ENCODE measurements at regions of chr2 and their contacts with region 1.

Region 1: DNA sequence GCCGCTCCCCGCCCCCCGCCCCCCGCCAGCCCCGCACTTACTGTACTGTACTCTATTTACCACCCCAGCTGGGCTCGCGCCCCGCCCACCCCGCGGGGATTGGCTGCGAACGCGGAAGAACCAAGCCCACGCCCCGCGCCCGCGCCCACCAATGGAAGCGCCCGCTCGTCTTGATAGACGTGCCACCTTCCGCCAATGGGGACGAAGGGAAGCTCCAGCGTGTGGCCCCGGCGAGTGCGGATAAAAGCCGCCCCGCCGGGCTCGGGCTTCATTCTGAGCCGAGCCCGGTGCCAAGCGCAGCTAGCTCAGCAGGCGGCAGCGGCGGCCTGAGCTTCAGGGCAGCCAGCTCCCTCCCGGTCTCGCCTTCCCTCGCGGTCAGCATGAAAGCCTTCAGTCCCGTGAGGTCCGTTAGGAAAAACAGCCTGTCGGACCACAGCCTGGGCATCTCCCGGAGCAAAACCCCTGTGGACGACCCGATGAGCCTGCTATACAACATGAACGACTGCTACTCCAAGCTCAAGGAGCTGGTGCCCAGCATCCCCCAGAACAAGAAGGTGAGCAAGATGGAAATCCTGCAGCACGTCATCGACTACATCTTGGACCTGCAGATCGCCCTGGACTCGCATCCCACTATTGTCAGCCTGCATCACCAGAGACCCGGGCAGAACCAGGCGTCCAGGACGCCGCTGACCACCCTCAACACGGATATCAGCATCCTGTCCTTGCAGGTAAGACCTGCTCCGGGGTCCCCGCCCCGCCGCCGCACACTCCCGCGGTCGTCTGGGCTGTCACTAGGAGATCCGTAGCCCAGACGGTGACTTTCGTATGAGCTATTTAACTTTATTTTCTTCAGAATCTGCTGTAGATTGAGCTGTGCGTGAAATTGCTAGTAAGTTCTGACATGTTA is at the start of gene ID2:
- DNase-seq: peak; percentile 94 to 99 (median 98)
- ATAC-seq: peak; percentile 76 to 81 (median 78)
- H3K4me3 ChIP-seq: peak within 1 kb of the TSS; percentile 80
- H3K4me3 Mint-ChIP-seq: peak within 1 kb of the TSS; percentile 94 to 99 (median 96)
- H3K27ac ChIP-seq: peak within 1 kb of the TSS; percentile 70
- H3K27ac Mint-ChIP-seq: peak within 1 kb of the TSS; percentile 89 to 93
- H3K4me1 ChIP-seq: peaks cover 19 to 48% of the 10 kb centered on the region in 2 experiments
- H3K4me1 Mint-ChIP-seq: peaks cover 44 to 60% (median 50%) of the 10 kb centered on the region in 3 donors
- H3K27me3 ChIP-seq: peaks cover 0 to 19% of the 10 kb centered on the region in 2 experiments
- H3K27me3 Mint-ChIP-seq: peaks cover 13 to 15% of the 10 kb centered on the region in 2 donors
- total RNA-seq, gene ID2: 55.5 to 153 (median 71.1) TPM

Region 2: DNA sequence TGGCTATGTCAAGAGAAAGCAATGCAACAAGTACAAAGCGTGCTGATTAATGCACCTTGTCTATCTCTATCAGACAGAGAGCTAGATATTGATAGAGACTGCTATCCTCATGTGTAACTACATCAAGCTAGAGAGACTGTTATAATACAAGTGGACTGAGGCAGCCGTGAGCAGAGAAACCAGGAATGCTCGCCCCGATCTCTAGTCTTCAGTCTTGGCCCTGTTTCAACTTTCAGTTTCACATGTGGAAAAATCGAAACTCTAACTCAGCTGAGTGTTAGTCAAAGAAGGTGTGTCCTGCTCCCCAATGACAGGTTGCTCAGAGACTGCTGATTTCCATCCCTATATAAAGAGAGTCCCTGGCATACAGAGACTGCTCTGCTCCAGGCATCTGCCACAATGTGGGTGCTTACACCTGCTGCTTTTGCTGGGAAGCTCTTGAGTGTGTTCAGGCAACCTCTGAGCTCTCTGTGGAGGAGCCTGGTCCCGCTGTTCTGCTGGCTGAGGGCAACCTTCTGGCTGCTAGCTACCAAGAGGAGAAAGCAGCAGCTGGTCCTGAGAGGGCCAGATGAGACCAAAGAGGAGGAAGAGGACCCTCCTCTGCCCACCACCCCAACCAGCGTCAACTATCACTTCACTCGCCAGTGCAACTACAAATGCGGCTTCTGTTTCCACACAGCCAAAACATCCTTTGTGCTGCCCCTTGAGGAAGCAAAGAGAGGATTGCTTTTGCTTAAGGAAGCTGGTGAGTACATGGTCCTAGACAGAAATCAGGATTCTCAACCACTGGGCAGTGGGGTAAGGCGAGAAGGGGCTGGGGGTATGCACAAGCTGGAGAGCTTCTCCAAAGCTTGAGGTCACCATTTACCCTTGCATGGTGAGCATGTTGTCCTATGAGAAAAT is 1804.4 kb before region 1 on chr2 and contains the start of gene RSAD2:
- CTCF ChIA-PET with region 1: no interaction called
- POLR2A ChIA-PET with region 1: interaction called in 1 of 2 experiments, 11 read pairs
- DNase-seq: peak in 18 of 35 experiments; percentile 4 to 77 (median 11)
- ATAC-seq: peak; percentile 76 to 83 (median 80)
- H3K4me3 ChIP-seq: peak within 1 kb of the TSS; percentile 55 to 71
- H3K4me3 Mint-ChIP-seq: peak within 1 kb of the TSS; percentile 74 to 91 (median 87)
- H3K27ac ChIP-seq: peak within 1 kb of the TSS; percentile 58
- H3K27ac Mint-ChIP-seq: peak within 1 kb of the TSS; percentile 89 to 94
- H3K4me1 ChIP-seq: peaks cover 32 to 53% of the 10 kb centered on the region in 2 experiments
- H3K4me1 Mint-ChIP-seq: peaks cover 63 to 79% (median 73%) of the 10 kb centered on the region in 3 donors
- H3K27me3 ChIP-seq: no peaks in the 10 kb centered on the region
- H3K27me3 Mint-ChIP-seq: no peaks in the 10 kb centered on the region
- total RNA-seq, gene RSAD2: 3.2 to 10.7 (median 7.2) TPM

Region 3: DNA sequence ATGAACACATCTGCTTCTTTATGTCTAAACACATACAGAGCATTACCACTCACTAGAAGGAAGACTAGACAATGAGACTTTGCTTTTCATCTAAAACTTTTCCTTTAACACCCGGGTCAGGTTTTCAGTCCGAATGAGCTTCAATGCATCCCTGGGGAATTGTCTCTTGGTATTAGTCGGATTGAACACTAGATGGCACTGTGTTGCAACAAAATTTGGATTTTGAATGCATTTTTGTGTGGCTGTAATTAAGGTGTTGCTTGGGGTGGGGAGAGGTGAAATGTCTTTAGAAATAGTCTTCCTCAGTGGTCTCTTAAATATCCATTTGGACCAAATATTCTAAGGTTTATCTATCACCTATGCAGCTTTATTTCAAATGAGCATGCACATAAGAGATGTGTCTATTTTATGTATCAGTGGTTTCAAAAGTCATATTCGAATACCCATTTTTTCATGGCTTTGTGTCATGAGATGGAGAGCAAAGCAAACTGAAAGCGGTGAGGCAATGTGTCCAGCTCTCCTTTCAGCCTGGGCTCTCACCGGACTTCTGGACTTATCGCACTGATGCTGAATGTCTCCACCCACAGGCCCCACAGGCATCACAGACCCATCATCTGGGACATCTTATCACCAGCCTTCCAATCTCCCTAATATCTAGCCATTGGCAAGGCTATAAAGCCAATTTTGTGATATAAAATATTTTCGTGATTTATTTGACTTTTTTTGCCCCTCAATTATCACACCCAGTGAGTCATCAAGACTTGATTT is 1254.6 kb before region 1 on chr2:
- CTCF ChIA-PET with region 1: interaction called, 6 to 11 read pairs
- POLR2A ChIA-PET with region 1: interaction called in 1 of 2 experiments, 5 read pairs
- DNase-seq: peak in 5 of 35 experiments; percentile 6 to 82 (median 40)
- ATAC-seq: peak; percentile 21 to 54 (median 38)
- H3K4me3 ChIP-seq: no peak overlapping the region
- H3K4me3 Mint-ChIP-seq: peak overlapping the region in 2 of 3 donors; percentile 0 to 4
- H3K27ac ChIP-seq: peak overlapping the region; percentile 10
- H3K27ac Mint-ChIP-seq: peak overlapping the region; percentile 41 to 67
- H3K4me1 ChIP-seq: peaks cover 29 to 47% of the 10 kb centered on the region in 2 experiments
- H3K4me1 Mint-ChIP-seq: peaks cover 38 to 41% (median 41%) of the 10 kb centered on the region in 3 donors
- H3K27me3 ChIP-seq: no peaks in the 10 kb centered on the region
- H3K27me3 Mint-ChIP-seq: peaks cover 5 to 6% of the 10 kb centered on the region in 2 donors

Region 4: DNA sequence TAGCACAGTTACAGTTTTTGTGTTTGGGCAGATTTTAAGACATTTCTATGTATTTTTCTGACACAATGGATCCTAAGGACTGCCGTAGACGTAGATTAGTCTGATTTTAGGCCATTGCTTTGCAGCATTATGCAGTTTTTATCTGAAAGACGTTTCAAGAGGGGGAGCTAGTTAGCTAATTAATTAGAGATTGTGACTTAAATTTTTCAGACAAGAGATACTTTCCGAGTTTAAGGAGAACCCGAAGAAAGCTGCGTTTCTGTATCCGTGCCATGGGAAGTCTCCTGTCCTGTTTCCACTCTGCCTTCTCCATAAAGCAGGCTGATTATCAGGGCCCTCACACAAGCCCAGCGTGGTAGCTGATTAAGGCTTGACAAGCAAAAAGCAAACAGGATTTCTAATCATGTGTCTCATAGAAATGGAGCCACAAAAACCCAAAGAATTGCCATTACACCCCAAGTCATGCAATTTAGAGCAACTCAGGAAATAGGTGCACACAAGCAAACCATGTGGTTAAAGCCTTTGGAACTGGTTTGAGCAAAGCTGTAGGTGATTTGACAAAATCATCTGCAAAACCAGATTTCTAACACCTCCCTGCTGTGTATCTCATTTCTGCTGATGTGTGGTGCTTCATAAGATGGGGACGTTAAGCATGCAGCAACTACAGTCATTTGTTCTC is 956.7 kb before region 1 on chr2:
- CTCF ChIA-PET with region 1: interaction called in 1 of 2 experiments, 3 read pairs
- POLR2A ChIA-PET with region 1: interaction called in 1 of 2 experiments, 13 read pairs
- DNase-seq: peak in 22 of 35 experiments; percentile 9 to 79 (median 22)
- ATAC-seq: peak; percentile 70 to 85 (median 80)
- H3K4me3 ChIP-seq: peak overlapping the region in 1 of 2 donors; percentile 45
- H3K4me3 Mint-ChIP-seq: peak overlapping the region; percentile 53 to 79 (median 73)
- H3K27ac ChIP-seq: peak overlapping the region; percentile 67
- H3K27ac Mint-ChIP-seq: peak overlapping the region; percentile 76 to 81
- H3K4me1 ChIP-seq: peaks cover 10 to 60% of the 10 kb centered on the region in 2 experiments
- H3K4me1 Mint-ChIP-seq: peaks cover 50 to 63% (median 52%) of the 10 kb centered on the region in 3 donors
- H3K27me3 ChIP-seq: no peaks in the 10 kb centered on the region
- H3K27me3 Mint-ChIP-seq: no peaks in the 10 kb centered on the region

Region 5: GRCh38 chr2:8406271-8406670 is 275.8 kb before region 1 on chr2:
- CTCF ChIA-PET with region 1: no interaction called
- POLR2A ChIA-PET with region 1: interaction called in 1 of 2 experiments, 17 read pairs
- DNase-seq: no peak
- ATAC-seq: no peak
- H3K4me3 ChIP-seq: no peak overlapping the region
- H3K4me3 Mint-ChIP-seq: no peak overlapping the region
- H3K27ac ChIP-seq: no peak overlapping the region
- H3K27ac Mint-ChIP-seq: no peak overlapping the region
- H3K4me1 ChIP-seq: no peaks in the 10 kb centered on the region
- H3K4me1 Mint-ChIP-seq: peaks cover 0 to 19% (median 12%) of the 10 kb centered on the region in 3 donors
- H3K27me3 ChIP-seq: no peaks in the 10 kb centered on the region
- H3K27me3 Mint-ChIP-seq: no peaks in the 10 kb centered on the region

Region 6: DNA sequence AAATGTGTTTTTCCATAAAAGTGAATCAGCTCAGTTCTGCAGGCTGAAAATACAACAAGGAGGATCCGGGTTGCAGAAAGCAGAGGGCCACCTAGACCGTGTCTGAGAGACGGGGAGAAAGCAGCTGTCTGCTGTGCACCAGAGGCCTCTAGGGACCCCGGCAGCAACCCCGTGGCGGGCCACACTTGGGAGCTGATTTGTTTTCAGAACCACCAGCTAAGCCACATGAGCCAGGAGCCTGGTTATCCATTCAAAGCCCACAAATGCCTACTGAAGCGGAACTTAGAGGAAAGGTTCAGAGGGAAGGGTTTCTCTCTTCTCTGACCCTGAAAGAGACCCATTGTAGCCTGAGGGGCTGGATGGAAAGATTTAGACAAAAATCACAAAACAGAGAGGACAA is 28.6 kb before region 1 on chr2:
- CTCF ChIA-PET with region 1: no interaction called
- POLR2A ChIA-PET with region 1: no interaction called
- DNase-seq: no peak
- ATAC-seq: no peak
- H3K4me3 ChIP-seq: no peak overlapping the region
- H3K4me3 Mint-ChIP-seq: no peak overlapping the region
- H3K27ac ChIP-seq: no peak overlapping the region
- H3K27ac Mint-ChIP-seq: no peak overlapping the region
- H3K4me1 ChIP-seq: peaks cover 5 to 7% of the 10 kb centered on the region in 2 experiments
- H3K4me1 Mint-ChIP-seq: peaks cover 8 to 12% (median 8%) of the 10 kb centered on the region in 3 donors
- H3K27me3 ChIP-seq: peaks cover 0 to 11% of the 10 kb centered on the region in 2 experiments
- H3K27me3 Mint-ChIP-seq: peaks cover 7 to 17% of the 10 kb centered on the region in 2 donors

Region 7: GRCh38 chr2:8663997-8664396 is 18.0 kb before region 1 on chr2:
- CTCF ChIA-PET with region 1: interaction called in 1 of 2 experiments, 3 read pairs
- POLR2A ChIA-PET with region 1: interaction called in 1 of 2 experiments, 12 read pairs
- DNase-seq: peak in 5 of 35 experiments; percentile 11 to 35 (median 26)
- ATAC-seq: peak in 3 of 4 experiments; percentile 61 to 64 (median 63)
- H3K4me3 ChIP-seq: no peak overlapping the region
- H3K4me3 Mint-ChIP-seq: peak overlapping the region in 1 of 3 donors; percentile 61
- H3K27ac ChIP-seq: no peak overlapping the region
- H3K27ac Mint-ChIP-seq: no peak overlapping the region
- H3K4me1 ChIP-seq: peaks cover 14 to 26% of the 10 kb centered on the region in 2 experiments
- H3K4me1 Mint-ChIP-seq: peaks cover 15 to 19% (median 17%) of the 10 kb centered on the region in 3 donors
- H3K27me3 ChIP-seq: peaks cover 0 to 11% of the 10 kb centered on the region in 2 experiments
- H3K27me3 Mint-ChIP-seq: peaks cover 0 to 6% of the 10 kb centered on the region in 2 donors

Region 8: DNA sequence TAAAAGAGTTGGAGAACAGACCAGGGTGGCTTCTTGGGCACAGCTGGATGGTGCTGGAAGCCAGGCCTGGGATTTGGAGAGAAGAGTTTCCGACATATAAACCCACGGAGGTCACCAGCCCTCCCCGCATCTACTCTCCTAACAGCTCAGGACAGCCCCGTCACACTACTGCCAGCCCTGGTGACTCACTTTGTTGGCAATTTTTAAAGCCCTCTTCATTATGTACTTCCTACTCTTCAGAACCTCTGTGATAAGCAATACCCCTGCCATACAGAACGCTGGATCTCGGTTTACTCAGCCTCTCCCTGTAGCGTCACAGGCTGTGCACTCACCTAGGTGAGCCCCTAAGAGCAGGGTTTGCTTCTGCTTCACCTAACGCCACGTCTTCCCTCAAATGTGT is 47.9 kb after region 1 on chr2:
- CTCF ChIA-PET with region 1: interaction called in 1 of 2 experiments, 12 read pairs
- POLR2A ChIA-PET with region 1: no interaction called
- DNase-seq: no peak
- ATAC-seq: no peak
- H3K4me3 ChIP-seq: no peak overlapping the region
- H3K4me3 Mint-ChIP-seq: no peak overlapping the region
- H3K27ac ChIP-seq: no peak overlapping the region
- H3K27ac Mint-ChIP-seq: no peak overlapping the region
- H3K4me1 ChIP-seq: no peaks in the 10 kb centered on the region
- H3K4me1 Mint-ChIP-seq: no peaks in the 10 kb centered on the region
- H3K27me3 ChIP-seq: no peaks in the 10 kb centered on the region
- H3K27me3 Mint-ChIP-seq: no peaks in the 10 kb centered on the region